A549 (cell line): ENCODE measurements at regions of chr10 and their contacts with region 1.

Region 1: DNA sequence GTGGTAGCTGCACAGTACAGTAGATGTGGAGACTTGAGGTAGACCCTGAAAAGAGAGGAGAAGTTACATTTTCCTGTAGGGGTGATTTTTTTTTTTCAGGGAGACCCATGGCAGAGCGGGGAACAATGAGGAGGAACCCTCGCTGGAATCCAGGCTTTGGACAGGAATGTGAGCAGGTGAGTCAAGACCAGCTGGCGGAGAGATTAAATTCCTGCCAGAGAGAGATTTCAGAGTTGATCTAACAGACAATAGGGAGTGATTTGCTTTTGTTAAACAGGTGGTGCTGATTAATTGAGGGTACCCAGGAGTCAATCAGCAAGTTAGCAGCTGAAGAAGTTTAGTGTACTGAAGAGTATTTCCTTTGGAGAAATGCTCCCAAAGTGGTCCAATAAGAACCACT is 41.6 kb upstream of the MINDY3 start:
- DNase-seq: no peak
- ATAC-seq: 0 out of 6 replicates have a peak, but pooled peaks of 1 of the 2 experiments have one; percentile 19
- H3K4me3 ChIP-seq: no peak overlapping the region
- H3K27ac ChIP-seq: no peak overlapping the region
- H3K4me1 ChIP-seq: no peaks in the 10 kb centered on the region
- CTCF ChIP-seq: no peak
- EP300 ChIP-seq: no peak
- POLR2A ChIP-seq: no peak
- RAD21 ChIP-seq: no peak

Region 2: GRCh38 chr10:15881542-15881941 is 20.3 kb before region 1 on chr10:
- CTCF ChIA-PET with region 1: interaction called, 10 read pairs
- POLR2A ChIA-PET with region 1: no interaction called
- DNase-seq: no peak
- ATAC-seq: no peak
- H3K4me3 ChIP-seq: no peak overlapping the region
- H3K27ac ChIP-seq: no peak overlapping the region
- H3K4me1 ChIP-seq: no peaks in the 10 kb centered on the region
- CTCF ChIP-seq: no peak
- EP300 ChIP-seq: no peak
- POLR2A ChIP-seq: no peak
- RAD21 ChIP-seq: no peak

Region 3: GRCh38 chr10:16545116-16545736 is 643.3 kb after region 1 on chr10:
- CTCF ChIA-PET with region 1: interaction called, 16 read pairs
- POLR2A ChIA-PET with region 1: no interaction called
- DNase-seq: peak; percentile 54 to 65
- ATAC-seq: peak; percentile 88
- H3K4me3 ChIP-seq: no peak overlapping the region
- H3K27ac ChIP-seq: no peak overlapping the region
- H3K4me1 ChIP-seq: no peaks in the 10 kb centered on the region
- CTCF ChIP-seq: peak; percentile 68
- EP300 ChIP-seq: no peak
- POLR2A ChIP-seq: no peak
- RAD21 ChIP-seq: peak; percentile 63 to 71

Region 4: DNA sequence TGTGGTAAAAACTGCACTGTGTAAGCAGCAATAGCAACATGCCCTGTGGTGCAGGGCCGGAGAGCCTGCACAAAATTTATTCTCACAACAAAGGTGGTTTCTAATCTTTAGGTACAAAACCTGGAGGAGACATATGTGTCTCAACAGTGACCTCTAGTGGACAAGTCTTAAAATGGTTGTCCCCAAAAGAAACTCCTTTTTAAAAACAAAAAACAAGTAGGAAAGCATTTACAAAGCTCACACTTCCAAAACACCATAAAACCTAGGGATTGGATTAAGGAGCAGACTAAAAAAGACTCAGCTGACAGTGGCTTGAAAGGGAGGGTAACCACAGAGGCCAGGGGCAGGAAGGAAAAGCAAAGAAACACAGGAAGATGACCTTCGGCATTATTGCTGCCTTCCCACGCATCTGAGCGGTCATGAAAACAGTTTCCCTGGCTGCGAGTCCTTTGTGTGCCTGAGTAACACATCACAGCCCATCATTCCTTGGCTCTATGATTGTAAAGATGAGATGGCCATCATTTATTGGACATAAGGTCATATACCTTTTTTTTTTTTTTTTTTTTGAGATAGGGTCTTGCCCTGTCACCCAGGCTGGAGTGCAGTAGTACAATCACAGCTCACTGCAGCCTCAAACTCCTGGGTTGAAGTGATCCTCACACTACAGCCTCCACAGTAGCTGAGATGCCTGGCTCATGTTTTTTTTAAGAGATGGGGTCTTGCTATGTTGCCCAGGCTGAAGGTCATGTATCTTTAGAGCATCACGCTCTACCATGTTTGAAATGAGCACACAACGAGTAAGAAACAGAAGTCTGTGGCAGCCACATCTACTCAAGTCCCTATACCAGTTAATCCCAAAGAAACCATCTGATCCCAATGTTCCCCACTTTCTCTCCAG is 875.8 kb after region 1 on chr10:
- CTCF ChIA-PET with region 1: interaction called, 10 read pairs
- POLR2A ChIA-PET with region 1: no interaction called
- DNase-seq: peak; percentile 52 to 53
- ATAC-seq: peak in 1 of 2 experiments; percentile 38; a peak in 1 of 6 replicates
- H3K4me3 ChIP-seq: no peak overlapping the region
- H3K27ac ChIP-seq: no peak overlapping the region
- H3K4me1 ChIP-seq: no peaks in the 10 kb centered on the region
- CTCF ChIP-seq: peak; percentile 78
- EP300 ChIP-seq: no peak
- POLR2A ChIP-seq: no peak
- RAD21 ChIP-seq: peak; percentile 72 to 79